Naive thymus-derived CD4-positive, alpha-beta T cell (primary cell): ENCODE measurements at regions of chr1 and their contacts with region 1.

Region 1: GRCh38 chr1:42335050-42335808 is at the start of gene FOXJ3:
- DNase-seq: peak; percentile 83 to 93 (median 91)
- ATAC-seq: peak; percentile 96
- H3K4me3 ChIP-seq: peak within 1 kb of the TSS; percentile 94
- H3K4me3 Mint-ChIP-seq: peak within 1 kb of the TSS; percentile 84 to 96 (median 94)
- H3K27ac ChIP-seq: peak within 1 kb of the TSS; percentile 90
- H3K27ac Mint-ChIP-seq: peak within 1 kb of the TSS; percentile 83 to 97 (median 92)
- H3K4me1 ChIP-seq: peaks cover 16 to 19% of the 10 kb centered on the region in 2 donors
- H3K4me1 Mint-ChIP-seq: peaks cover 42 to 65% (median 56%) of the 10 kb centered on the region in 7 donors
- H3K27me3 ChIP-seq: no peaks in the 10 kb centered on the region
- H3K27me3 Mint-ChIP-seq: peaks cover 0 to 3% (median 0%) of the 10 kb centered on the region in 5 donors
- total RNA-seq, gene FOXJ3: 59.5 to 93.3 (median 76.5) TPM

Region 2: GRCh38 chr1:42173155-42173933 is 161.9 kb before region 1 on chr1:
- CTCF ChIA-PET with region 1: interaction called, 4 read pairs
- POLR2A ChIA-PET with region 1: no interaction called
- intact Hi-C with region 1: loop called (anchors 2 to 5 kb)
- DNase-seq: peak; percentile 28 to 76 (median 57)
- ATAC-seq: peak; percentile 85
- H3K4me3 ChIP-seq: no peak overlapping the region
- H3K4me3 Mint-ChIP-seq: no peak overlapping the region
- H3K27ac ChIP-seq: no peak overlapping the region
- H3K27ac Mint-ChIP-seq: peak overlapping the region in 2 of 9 donors; percentile 17 to 71
- H3K4me1 ChIP-seq: no peaks in the 10 kb centered on the region
- H3K4me1 Mint-ChIP-seq: peaks cover 0 to 3% (median 0%) of the 10 kb centered on the region in 7 donors
- H3K27me3 ChIP-seq: no peaks in the 10 kb centered on the region
- H3K27me3 Mint-ChIP-seq: no peaks in the 10 kb centered on the region

Region 3: DNA sequence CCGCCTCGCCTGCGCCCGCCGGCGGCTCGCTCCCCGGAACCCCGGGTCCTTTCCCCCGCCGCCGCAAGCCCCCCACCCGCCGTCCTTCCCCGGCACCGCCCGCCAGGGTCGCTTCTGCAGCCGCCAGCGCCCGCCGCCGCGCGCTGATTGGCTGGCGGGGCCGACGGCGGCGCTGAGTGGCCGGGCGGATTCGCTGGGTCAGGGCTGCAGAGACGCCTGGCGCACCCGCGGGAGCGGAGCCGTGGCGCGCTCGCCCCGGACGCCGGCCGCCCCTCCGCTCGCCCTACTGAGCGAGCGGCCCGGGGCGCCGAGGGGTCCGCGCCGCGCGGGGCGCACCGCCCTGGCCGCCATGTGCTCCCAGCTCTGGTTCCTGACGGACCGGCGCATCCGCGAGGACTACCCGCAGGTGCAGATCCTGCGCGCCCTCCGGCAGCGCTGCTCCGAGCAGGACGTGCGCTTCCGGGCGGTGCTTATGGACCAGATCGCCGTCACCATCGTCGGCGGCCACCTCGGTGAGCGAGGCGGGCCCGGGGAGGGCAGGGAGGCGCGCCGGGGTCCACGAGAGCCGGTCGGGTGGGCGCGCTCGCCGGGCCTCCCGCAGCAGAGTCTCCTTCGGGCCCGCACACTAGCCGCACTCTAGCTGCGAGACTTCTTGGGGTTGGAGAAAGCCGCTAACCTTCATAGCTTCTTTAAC is 45.5 kb after region 1 on chr1 and contains the start of gene RIMKLA:
- CTCF ChIA-PET with region 1: no interaction called
- POLR2A ChIA-PET with region 1: no interaction called
- intact Hi-C with region 1: loop called in 1 of 2 experiments (anchors 2 kb)
- DNase-seq: peak in 8 of 9 donors; percentile 8 to 70 (median 16)
- ATAC-seq: peak; percentile 81
- H3K4me3 ChIP-seq: peak within 1 kb of the TSS; percentile 33
- H3K4me3 Mint-ChIP-seq: peak within 1 kb of the TSS; percentile 77 to 85 (median 82)
- H3K27ac ChIP-seq: no peak within 1 kb of the TSS
- H3K27ac Mint-ChIP-seq: peak within 1 kb of the TSS in 1 of 9 donors; percentile 22
- H3K4me1 ChIP-seq: no peaks in the 10 kb centered on the region
- H3K4me1 Mint-ChIP-seq: peaks cover 0 to 15% (median 7%) of the 10 kb centered on the region in 7 donors
- H3K27me3 ChIP-seq: peaks cover 0 to 14% of the 10 kb centered on the region in 2 donors
- H3K27me3 Mint-ChIP-seq: peaks cover 23 to 50% (median 43%) of the 10 kb centered on the region in 5 donors
- total RNA-seq, gene RIMKLA: 0.03 to 3.1 (median 0.17) TPM in 4 of 5 experiments, not detected in the other

Region 4: DNA sequence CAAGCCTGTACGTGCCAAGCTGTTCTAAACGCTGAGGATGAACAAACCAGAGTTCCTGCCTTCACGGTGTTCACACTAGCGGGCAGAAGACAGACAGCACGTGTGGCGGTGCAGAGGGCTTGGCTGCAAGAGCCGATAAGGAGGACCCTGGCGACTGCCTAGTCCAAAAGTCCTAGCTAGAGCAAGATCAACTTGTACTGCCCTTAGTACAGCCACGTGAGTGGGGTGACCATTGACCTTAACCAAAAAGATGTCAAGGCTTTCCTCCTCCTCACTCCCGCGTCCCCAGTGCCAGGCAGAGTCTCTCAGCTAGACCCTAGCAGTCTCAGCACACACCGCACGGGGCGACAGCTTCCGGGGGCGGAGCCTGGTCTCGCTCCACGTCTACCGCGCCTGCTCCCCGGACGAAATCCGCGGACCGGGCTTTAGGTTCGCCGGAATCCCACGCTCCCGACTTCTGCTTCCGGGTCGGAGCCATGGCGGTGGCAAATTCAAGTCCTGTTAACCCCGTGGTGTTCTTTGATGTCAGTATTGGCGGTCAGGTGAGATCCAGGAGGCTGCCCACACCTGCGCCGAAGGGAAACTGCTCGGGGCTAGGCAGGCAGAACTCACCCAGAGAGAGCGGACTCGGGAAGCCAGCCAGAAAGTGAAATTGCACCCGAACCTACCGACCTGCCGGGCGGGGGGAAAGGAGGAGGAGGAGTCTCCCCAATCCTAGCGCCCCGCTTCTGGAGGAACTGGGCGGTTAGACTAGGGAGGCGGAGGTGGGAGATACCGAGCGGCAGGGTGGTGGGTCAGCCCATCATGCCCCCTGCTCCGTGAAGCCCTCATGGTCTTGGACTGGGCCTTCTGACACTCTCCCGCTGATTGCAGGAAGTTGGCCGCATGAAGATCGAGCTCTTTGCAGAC is 323.0 kb after region 1 on chr1 and contains the start of gene PPIH:
- CTCF ChIA-PET with region 1: no interaction called
- POLR2A ChIA-PET with region 1: no interaction called
- intact Hi-C with region 1: loop called (anchors 1 to 5 kb)
- DNase-seq: peak; percentile 82 to 94 (median 92)
- ATAC-seq: peak; percentile 99
- H3K4me3 ChIP-seq: peak within 1 kb of the TSS; percentile 90
- H3K4me3 Mint-ChIP-seq: peak within 1 kb of the TSS; percentile 94 to 99 (median 99)
- H3K27ac ChIP-seq: peak within 1 kb of the TSS; percentile 75
- H3K27ac Mint-ChIP-seq: peak within 1 kb of the TSS; percentile 84 to 98 (median 96)
- H3K4me1 ChIP-seq: peaks cover 17 to 22% of the 10 kb centered on the region in 2 donors
- H3K4me1 Mint-ChIP-seq: peaks cover 20 to 48% (median 44%) of the 10 kb centered on the region in 7 donors
- H3K27me3 ChIP-seq: no peaks in the 10 kb centered on the region
- H3K27me3 Mint-ChIP-seq: peaks cover 0 to 3% (median 0%) of the 10 kb centered on the region in 5 donors
- total RNA-seq, gene PPIH: 28.0 to 76.8 (median 40.7) TPM

Region 5: DNA sequence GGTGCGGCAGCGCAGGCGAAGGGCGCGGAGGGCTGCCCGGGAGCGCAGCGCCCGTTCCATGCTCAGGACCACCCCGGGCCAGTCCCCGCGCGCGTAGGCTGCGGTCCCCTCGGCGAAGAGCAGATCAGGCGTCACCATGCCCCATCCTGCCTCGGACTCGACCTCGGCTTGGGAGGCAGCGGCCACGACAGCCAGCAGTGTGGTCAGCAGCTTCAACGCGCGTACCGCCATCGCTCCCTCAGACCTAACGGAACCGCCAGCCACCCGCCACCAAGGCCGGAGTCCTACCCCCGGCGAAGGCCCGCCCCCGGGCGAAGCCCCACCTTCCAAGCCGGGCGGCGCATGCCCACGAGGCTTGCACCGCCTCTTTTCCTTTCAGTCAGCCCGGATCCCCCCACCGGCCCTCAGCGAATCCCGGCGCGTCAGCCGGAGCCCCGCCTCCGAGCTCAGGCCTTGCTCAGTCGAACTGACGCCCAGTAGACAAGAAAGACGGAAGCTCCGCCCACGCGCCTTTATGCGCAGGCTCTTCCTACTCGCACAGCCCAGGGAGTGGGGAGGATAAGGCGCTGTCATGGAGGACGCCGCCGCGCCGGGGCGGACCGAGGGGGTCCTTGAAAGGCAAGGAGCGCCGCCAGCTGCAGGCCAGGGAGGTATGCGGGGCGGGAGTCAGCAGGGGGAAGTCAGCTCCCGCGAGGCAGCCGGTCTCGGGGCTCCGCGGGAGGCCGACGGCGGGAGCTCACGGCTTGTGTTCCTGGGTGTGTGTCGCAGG is 431.7 kb after region 1 on chr1 and contains the starts of genes C1orf50 and P3H1:
- CTCF ChIA-PET with region 1: no interaction called
- POLR2A ChIA-PET with region 1: no interaction called
- intact Hi-C with region 1: loop called (anchors 1 to 2 kb)
- DNase-seq: peak; percentile 98 to 100 (median 100)
- ATAC-seq: peak; percentile 96
- H3K4me3 ChIP-seq: peak within 1 kb of the TSS; percentile 91
- H3K4me3 Mint-ChIP-seq: peak within 1 kb of the TSS in 1 of 10 donors; percentile 92
- H3K27ac ChIP-seq: peak within 1 kb of the TSS; percentile 84
- H3K27ac Mint-ChIP-seq: peak within 1 kb of the TSS in 8 of 9 donors; percentile 70 to 96 (median 92)
- H3K4me1 ChIP-seq: peaks cover 25 to 35% of the 10 kb centered on the region in 2 donors
- H3K4me1 Mint-ChIP-seq: peaks cover 20 to 50% (median 32%) of the 10 kb centered on the region in 7 donors
- H3K27me3 ChIP-seq: no peaks in the 10 kb centered on the region
- H3K27me3 Mint-ChIP-seq: no peaks in the 10 kb centered on the region
- total RNA-seq, gene C1orf50: 7.0 to 20.8 (median 18.1) TPM
- total RNA-seq, gene P3H1: 32.5 to 61.8 (median 47.3) TPM